ENCODE measurements at regions of chr22 and their contacts with region 1.

Region 1: GRCh38 chr22:24175160-24175808 is 6.0 kb upstream of the SUSD2 start:
- DNase-seq: peak; percentile 60 to 67 (median 63)
- H3K4me3 ChIP-seq: no peak overlapping the region
- H3K4me3 Mint-ChIP-seq: no peak overlapping the region
- H3K27ac ChIP-seq: peak overlapping the region in 1 of 2 donors; percentile 26
- H3K27ac Mint-ChIP-seq: peak overlapping the region in 3 of 7 donors; percentile 0 to 76 (median 32)
- H3K4me1 ChIP-seq: no peaks in the 10 kb centered on the region
- H3K4me1 Mint-ChIP-seq: no peaks in the 10 kb centered on the region
- H3K27me3 ChIP-seq: no peaks in the 10 kb centered on the region
- H3K27me3 Mint-ChIP-seq: no peaks in the 10 kb centered on the region
- CTCF ChIP-seq: peak; percentile 81

Region 2: DNA sequence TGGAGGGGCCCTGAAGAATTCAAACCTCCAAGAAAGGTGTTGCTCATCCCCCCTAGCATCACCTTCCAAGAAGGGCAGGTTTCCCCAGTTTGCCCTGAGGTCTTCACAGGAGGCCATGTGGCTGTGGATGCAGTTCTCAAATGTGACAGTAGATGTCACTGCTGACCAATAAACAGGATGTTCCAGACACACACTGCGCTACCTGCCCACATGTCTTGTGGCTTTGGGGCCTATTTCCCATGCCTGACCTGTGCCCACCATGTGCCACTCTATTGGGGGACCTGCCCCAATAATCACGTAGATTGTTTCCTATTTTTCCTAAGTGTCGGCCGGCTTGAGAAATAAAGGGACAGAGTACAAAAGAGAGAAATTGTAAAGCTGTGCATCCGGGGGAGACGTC is 190.9 kb before region 1 on chr22:
- intact Hi-C with region 1: loop called in 1 of 2 experiments (anchors 10 kb)
- DNase-seq: peak in 1 of 3 donors; percentile 42
- H3K4me3 ChIP-seq: no peak overlapping the region
- H3K4me3 Mint-ChIP-seq: no peak overlapping the region
- H3K27ac ChIP-seq: no peak overlapping the region
- H3K27ac Mint-ChIP-seq: no peak overlapping the region
- H3K4me1 ChIP-seq: no peaks in the 10 kb centered on the region
- H3K4me1 Mint-ChIP-seq: no peaks in the 10 kb centered on the region
- H3K27me3 ChIP-seq: no peaks in the 10 kb centered on the region
- H3K27me3 Mint-ChIP-seq: peaks cover 0 to 9% (median 6%) of the 10 kb centered on the region in 3 donors
- CTCF ChIP-seq: no peak

Region 3: GRCh38 chr22:24037851-24038765 is 137.2 kb before region 1 on chr22:
- intact Hi-C with region 1: no loop called
- DNase-seq: no peak
- H3K4me3 ChIP-seq: no peak overlapping the region
- H3K4me3 Mint-ChIP-seq: no peak overlapping the region
- H3K27ac ChIP-seq: no peak overlapping the region
- H3K27ac Mint-ChIP-seq: peak overlapping the region in 1 of 7 donors; percentile 36
- H3K4me1 ChIP-seq: no peaks in the 10 kb centered on the region
- H3K4me1 Mint-ChIP-seq: peaks cover 6% of the 10 kb centered on the region
- H3K27me3 ChIP-seq: no peaks in the 10 kb centered on the region
- H3K27me3 Mint-ChIP-seq: peaks cover 0 to 2% (median 0%) of the 10 kb centered on the region in 3 donors
- CTCF ChIP-seq: no peak

Region 4: GRCh38 chr22:24128631-24129262 is 46.5 kb before region 1 on chr22:
- intact Hi-C with region 1: loop called in 1 of 2 experiments (anchors 5 kb)
- DNase-seq: no peak
- H3K4me3 ChIP-seq: peak overlapping the region in 1 of 3 experiments; percentile 12
- H3K4me3 Mint-ChIP-seq: no peak overlapping the region
- H3K27ac ChIP-seq: peak overlapping the region in 1 of 2 donors; percentile 50
- H3K27ac Mint-ChIP-seq: peak overlapping the region in 3 of 7 donors; percentile 24 to 70 (median 39)
- H3K4me1 ChIP-seq: peaks cover 25 to 26% of the 10 kb centered on the region in 2 donors
- H3K4me1 Mint-ChIP-seq: peaks cover 27% of the 10 kb centered on the region
- H3K27me3 ChIP-seq: no peaks in the 10 kb centered on the region
- H3K27me3 Mint-ChIP-seq: peaks cover 0 to 4% (median 3%) of the 10 kb centered on the region in 3 donors
- CTCF ChIP-seq: no peak

Region 5: DNA sequence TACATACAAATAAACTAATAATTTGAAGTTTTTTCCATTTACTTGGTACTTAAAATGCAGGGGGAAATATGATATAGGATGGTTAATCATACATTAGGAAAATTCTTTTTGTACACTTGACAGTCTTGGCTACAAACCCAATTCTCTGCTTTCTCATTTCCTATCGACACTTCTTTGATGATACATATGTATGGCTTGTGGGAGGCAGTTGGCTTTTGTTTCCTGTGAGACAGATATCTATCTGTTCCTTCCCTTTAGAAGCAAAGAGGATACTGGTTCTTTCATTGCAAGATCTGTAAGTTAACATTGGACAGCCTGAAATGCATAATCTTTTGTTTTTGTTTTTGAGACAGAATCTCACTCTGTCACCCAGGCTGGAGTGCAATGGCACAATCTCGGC is 204.3 kb after region 1 on chr22:
- intact Hi-C with region 1: no loop called
- DNase-seq: no peak
- H3K4me3 ChIP-seq: no peak overlapping the region
- H3K4me3 Mint-ChIP-seq: no peak overlapping the region
- H3K27ac ChIP-seq: no peak overlapping the region
- H3K27ac Mint-ChIP-seq: peak overlapping the region in 1 of 7 donors; percentile 46
- H3K4me1 ChIP-seq: peaks cover 16 to 29% of the 10 kb centered on the region in 2 donors
- H3K4me1 Mint-ChIP-seq: peaks cover 39% of the 10 kb centered on the region
- H3K27me3 ChIP-seq: no peaks in the 10 kb centered on the region
- H3K27me3 Mint-ChIP-seq: no peaks in the 10 kb centered on the region
- CTCF ChIP-seq: no peak